ENCODE measurements at regions of chr3 and their contacts with region 1.

Region 1: DNA sequence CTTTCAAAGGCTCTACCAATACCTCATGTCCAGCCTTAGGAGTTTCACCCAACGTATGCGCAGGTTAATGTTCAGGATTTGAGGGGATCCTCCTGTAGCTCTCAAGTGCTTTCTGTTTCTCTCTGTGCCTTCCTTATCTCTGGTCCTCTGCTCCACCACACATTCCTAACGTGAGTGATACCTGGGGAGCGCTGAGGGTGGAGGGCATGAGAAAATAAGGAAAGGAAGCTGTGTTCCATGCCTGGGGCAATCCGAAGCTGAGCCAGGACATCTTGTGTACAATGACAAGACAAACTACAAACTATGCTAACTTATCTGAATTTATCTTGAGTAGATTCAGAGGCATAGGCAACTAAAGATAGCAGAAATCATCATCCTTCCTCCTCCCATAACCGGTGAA is 136.4 kb downstream of the SST start:
- DNase-seq: no peak
- ATAC-seq: no peak
- H3K4me3 ChIP-seq: no peak overlapping the region
- H3K27ac ChIP-seq: no peak overlapping the region
- H3K4me1 ChIP-seq: no peaks in the 10 kb centered on the region
- H3K27me3 ChIP-seq: peaks cover 0 to 4% (median 0%) of the 10 kb centered on the region in 9 donors
- CTCF ChIP-seq: no peak
- POLR2A ChIP-seq: no peak

Region 2: GRCh38 chr3:187519428-187519890 is 14.3 kb before region 1 on chr3:
- intact Hi-C with region 1: loop called in 1 of 10 experiments (anchors 2 kb)
- DNase-seq: no peak
- ATAC-seq: no peak
- H3K4me3 ChIP-seq: no peak overlapping the region
- H3K27ac ChIP-seq: peak overlapping the region in 4 of 12 donors; percentile 5 to 56 (median 34)
- H3K4me1 ChIP-seq: peaks cover 0 to 9% (median 0%) of the 10 kb centered on the region in 12 donors
- H3K27me3 ChIP-seq: no peaks in the 10 kb centered on the region
- CTCF ChIP-seq: no peak
- POLR2A ChIP-seq: no peak

Measured in heart left ventricle (tissue), 16 donors.